ENCODE measurements at regions of chr12 and their contacts with region 1.

Region 1: DNA sequence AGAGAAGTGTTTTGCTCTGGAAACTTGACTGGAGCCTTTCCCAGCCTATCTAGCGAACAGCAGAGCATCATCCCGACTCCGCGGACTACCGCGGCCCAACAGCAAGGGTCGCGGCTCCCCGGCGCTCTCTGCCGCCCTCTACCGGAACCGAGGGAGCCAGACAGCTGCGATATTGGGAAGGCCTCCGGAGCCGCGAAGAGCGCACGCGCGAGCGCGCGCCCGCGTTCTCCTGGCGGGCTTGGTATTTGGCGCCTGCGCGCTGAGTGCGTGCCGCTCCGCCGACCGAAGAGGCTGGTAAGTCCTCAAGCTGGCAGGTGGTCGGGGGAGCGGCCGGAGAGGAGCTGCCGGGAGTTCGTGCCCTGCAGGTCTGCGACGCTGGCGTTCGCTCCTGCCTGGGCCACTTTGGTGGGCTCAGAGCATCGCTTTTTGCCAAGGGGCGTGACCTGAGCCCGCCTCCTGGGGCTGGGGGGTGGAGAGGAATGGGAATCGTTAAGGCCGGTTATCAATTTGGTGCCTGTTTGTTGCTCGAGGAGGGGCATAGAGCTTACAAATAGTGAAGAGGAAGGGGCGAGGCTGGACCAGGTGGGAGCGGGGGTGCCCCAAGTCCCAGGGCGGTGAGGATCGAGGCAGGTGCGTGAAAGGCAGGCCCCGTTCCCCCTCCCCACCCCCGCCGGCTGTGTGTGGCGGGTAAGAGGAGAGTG is at the start of gene TMEM106C:
- DNase-seq: peak; percentile 94
- ATAC-seq: peak; percentile 98
- H3K4me3 Mint-ChIP-seq: peak within 1 kb of the TSS; percentile 97
- H3K27ac Mint-ChIP-seq: peak within 1 kb of the TSS; percentile 85
- H3K4me1 Mint-ChIP-seq: peaks cover 31% of the 10 kb centered on the region
- H3K27me3 Mint-ChIP-seq: peaks cover 27% of the 10 kb centered on the region
- total RNA-seq, gene TMEM106C: 139 to 140 TPM

Region 2: DNA sequence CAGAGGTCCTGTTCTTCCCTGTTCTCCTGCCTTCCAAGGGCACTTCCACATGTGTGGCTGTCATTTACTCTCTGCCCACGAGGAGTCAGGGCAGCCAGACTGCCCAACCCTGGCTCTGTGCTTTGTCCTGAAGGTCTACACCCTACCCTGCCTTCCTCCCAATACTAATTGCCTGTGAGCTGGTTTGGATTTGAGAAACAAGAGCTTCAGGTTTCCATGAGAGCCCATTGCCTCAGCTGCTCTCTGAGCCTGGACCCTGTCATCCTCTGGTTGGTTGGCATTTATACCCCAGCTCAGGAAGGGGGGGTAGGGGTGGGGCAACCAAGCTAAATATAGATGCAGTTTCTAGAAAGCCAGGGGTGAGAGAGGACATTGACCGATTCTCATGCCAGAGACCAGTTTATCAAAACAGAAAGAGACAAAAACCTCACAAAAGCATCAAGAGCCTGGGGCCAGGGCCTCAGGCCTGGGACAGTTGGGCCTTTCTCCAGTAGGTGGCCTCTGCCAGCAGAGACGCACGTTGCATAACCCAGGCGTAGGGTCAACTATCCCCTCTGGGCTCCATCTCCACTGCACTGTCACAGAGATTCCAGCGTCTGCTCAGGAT is 93.2 kb before region 1 on chr12:
- CTCF ChIA-PET with region 1: interaction called, 10 read pairs
- POLR2A ChIA-PET with region 1: no interaction called
- DNase-seq: no peak
- ATAC-seq: peak; percentile 38
- H3K4me3 Mint-ChIP-seq: no peak overlapping the region
- H3K27ac Mint-ChIP-seq: peak overlapping the region; percentile 41
- H3K4me1 Mint-ChIP-seq: peaks cover 48% of the 10 kb centered on the region
- H3K27me3 Mint-ChIP-seq: no peaks in the 10 kb centered on the region

Region 3: GRCh38 chr12:47896633-47897032 is 66.9 kb before region 1 on chr12:
- CTCF ChIA-PET with region 1: interaction called, 29 read pairs
- POLR2A ChIA-PET with region 1: no interaction called
- DNase-seq: no peak
- ATAC-seq: no peak
- H3K4me3 Mint-ChIP-seq: no peak overlapping the region
- H3K27ac Mint-ChIP-seq: peak overlapping the region; percentile 17
- H3K4me1 Mint-ChIP-seq: peaks cover 92% of the 10 kb centered on the region
- H3K27me3 Mint-ChIP-seq: no peaks in the 10 kb centered on the region

Region 4: GRCh38 chr12:47912556-47912955 is 50.9 kb before region 1 on chr12:
- CTCF ChIA-PET with region 1: interaction called, 12 read pairs
- POLR2A ChIA-PET with region 1: no interaction called
- DNase-seq: no peak
- ATAC-seq: no peak
- H3K4me3 Mint-ChIP-seq: no peak overlapping the region
- H3K27ac Mint-ChIP-seq: no peak overlapping the region
- H3K4me1 Mint-ChIP-seq: no peaks in the 10 kb centered on the region
- H3K27me3 Mint-ChIP-seq: peaks cover 46% of the 10 kb centered on the region

Region 5: GRCh38 chr12:47949441-47950308 is 13.8 kb before region 1 on chr12:
- CTCF ChIA-PET with region 1: interaction called, 44 read pairs
- POLR2A ChIA-PET with region 1: no interaction called
- DNase-seq: peak; percentile 50
- ATAC-seq: peak; percentile 75
- H3K4me3 Mint-ChIP-seq: no peak overlapping the region
- H3K27ac Mint-ChIP-seq: no peak overlapping the region
- H3K4me1 Mint-ChIP-seq: peaks cover 12% of the 10 kb centered on the region
- H3K27me3 Mint-ChIP-seq: peaks cover 18% of the 10 kb centered on the region

Region 6: DNA sequence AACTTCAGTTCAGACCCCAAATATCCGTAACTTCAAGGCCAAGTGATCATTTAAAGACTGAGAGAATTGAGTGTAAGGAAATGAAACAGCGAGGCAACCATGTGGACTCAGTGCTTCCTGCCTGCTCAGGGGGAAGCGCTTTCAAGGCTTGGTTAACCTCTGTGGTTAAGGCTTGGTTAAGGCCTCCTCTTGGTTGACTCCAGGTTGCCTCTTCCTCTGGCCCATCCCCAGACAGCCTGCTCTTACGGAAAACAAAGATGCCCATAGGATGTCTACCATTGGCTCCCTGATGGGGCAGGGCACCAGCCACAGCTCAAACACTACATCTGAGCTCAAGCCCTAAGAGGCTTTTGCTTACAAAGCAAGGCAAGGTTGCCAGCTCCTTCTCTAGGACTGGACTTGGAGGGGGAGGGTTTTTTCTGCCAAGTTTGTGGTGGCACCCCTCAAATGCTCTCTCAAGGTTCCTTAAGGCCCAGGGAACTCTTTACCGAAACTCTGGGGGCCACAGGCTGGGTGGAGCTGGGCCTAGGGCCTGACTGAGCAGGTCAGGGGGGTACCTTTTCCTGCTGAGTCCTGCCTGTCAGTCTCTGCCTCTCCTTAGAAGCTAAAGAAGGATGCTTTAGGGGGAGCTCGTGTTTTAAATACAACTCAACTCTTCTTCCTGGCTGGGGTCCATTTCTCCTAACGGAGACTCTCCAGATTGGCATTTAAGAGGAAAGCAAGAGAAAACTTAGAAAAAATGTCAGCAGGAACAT is 27.0 kb after region 1 on chr12:
- CTCF ChIA-PET with region 1: interaction called, 12 read pairs
- POLR2A ChIA-PET with region 1: no interaction called
- DNase-seq: peak; percentile 90
- ATAC-seq: peak; percentile 95
- H3K4me3 Mint-ChIP-seq: peak overlapping the region; percentile 6
- H3K27ac Mint-ChIP-seq: peak overlapping the region; percentile 72
- H3K4me1 Mint-ChIP-seq: peaks cover 33% of the 10 kb centered on the region
- H3K27me3 Mint-ChIP-seq: peaks cover 58% of the 10 kb centered on the region

Region 7: GRCh38 chr12:48054955-48055821 is 91.7 kb after region 1 on chr12:
- CTCF ChIA-PET with region 1: no interaction called
- POLR2A ChIA-PET with region 1: no interaction called
- DNase-seq: peak; percentile 50
- ATAC-seq: peak; percentile 59
- H3K4me3 Mint-ChIP-seq: no peak overlapping the region
- H3K27ac Mint-ChIP-seq: no peak overlapping the region
- H3K4me1 Mint-ChIP-seq: peaks cover 6% of the 10 kb centered on the region
- H3K27me3 Mint-ChIP-seq: no peaks in the 10 kb centered on the region

Region 8: GRCh38 chr12:48092611-48093010 is 129.1 kb after region 1 on chr12:
- CTCF ChIA-PET with region 1: no interaction called
- POLR2A ChIA-PET with region 1: no interaction called
- DNase-seq: no peak
- ATAC-seq: no peak
- H3K4me3 Mint-ChIP-seq: no peak overlapping the region
- H3K27ac Mint-ChIP-seq: no peak overlapping the region
- H3K4me1 Mint-ChIP-seq: no peaks in the 10 kb centered on the region
- H3K27me3 Mint-ChIP-seq: no peaks in the 10 kb centered on the region